ENCODE measurements at regions of chr2 and their contacts with region 1.

Region 1: DNA sequence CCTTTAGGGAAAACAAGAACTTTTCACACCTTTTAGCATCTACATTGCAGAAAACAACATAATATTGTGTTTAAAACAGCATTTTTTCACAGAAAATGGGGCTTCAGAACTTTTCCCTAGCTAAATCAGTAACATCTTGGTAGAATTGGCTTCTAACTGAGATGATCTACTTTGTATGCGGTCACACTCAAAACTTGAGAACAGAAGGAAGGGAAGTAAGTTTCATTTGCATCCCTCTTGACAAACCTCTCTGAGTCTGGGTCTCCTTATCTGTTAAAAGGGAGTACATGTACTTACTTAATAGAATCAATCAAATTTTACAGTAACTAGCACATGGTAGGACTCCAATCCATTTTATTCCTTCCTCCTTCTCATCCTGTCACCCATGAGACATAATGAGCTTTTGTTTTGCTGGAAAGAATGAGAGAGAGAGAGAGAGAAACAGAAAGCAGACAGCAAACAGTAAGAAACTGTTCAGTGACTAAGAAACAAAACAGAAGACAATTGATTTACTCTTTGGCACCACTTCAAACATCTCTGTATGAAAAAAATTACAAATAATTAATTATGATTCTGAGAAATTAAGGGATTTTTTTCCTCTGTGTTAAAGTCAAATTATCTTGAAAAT is 387.3 kb downstream of the SATB2 start:
- DNase-seq: no peak
- ATAC-seq: no peak
- H3K4me3 ChIP-seq: no peak overlapping the region
- H3K27ac ChIP-seq: no peak overlapping the region
- H3K4me1 ChIP-seq: no peaks in the 10 kb centered on the region
- H3K27me3 ChIP-seq: no peaks in the 10 kb centered on the region
- CTCF ChIP-seq: no peak
- EP300 ChIP-seq: no peak
- POLR2A ChIP-seq: no peak
- RAD21 ChIP-seq: no peak

Region 2: DNA sequence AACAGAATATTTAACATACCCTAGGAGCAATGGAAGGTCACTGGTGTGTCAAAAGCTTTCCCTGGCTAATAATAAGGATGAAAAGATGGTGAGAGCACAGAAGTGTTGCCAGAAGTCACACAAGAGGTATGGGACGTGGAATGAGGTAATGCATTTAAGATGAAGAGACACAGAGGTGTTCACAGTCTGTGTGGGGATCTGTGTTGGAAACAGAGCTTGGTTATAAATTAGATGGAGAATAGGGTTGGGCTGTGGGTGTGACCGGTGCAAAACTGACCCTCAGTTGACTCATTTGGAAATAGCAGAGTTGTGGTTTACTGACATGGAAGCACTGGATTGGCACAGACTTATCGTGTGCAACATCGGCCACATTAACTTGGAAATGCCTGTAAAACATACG is 14.8 kb after region 1 on chr2:
- CTCF ChIA-PET with region 1: no interaction called
- POLR2A ChIA-PET with region 1: no interaction called
- RAD21 ChIA-PET with region 1: no interaction called
- SMC1A ChIA-PET with region 1: interaction called, 10 read pairs
- in situ Hi-C with region 1: no loop called
- intact Hi-C with region 1: no loop called
- DNase-seq: no peak
- ATAC-seq: no peak; the same call in 2 of the 3 replicates
- H3K4me3 ChIP-seq: no peak overlapping the region
- H3K27ac ChIP-seq: no peak overlapping the region
- H3K4me1 ChIP-seq: no peaks in the 10 kb centered on the region
- H3K27me3 ChIP-seq: no peaks in the 10 kb centered on the region
- CTCF ChIP-seq: no peak
- EP300 ChIP-seq: no peak
- POLR2A ChIP-seq: no peak
- RAD21 ChIP-seq: no peak

Measured in GM12878 (cell line).